CD8-positive, alpha-beta T cell (primary cell): ENCODE measurements at regions of chr1 and their contacts with region 1.

Region 1: DNA sequence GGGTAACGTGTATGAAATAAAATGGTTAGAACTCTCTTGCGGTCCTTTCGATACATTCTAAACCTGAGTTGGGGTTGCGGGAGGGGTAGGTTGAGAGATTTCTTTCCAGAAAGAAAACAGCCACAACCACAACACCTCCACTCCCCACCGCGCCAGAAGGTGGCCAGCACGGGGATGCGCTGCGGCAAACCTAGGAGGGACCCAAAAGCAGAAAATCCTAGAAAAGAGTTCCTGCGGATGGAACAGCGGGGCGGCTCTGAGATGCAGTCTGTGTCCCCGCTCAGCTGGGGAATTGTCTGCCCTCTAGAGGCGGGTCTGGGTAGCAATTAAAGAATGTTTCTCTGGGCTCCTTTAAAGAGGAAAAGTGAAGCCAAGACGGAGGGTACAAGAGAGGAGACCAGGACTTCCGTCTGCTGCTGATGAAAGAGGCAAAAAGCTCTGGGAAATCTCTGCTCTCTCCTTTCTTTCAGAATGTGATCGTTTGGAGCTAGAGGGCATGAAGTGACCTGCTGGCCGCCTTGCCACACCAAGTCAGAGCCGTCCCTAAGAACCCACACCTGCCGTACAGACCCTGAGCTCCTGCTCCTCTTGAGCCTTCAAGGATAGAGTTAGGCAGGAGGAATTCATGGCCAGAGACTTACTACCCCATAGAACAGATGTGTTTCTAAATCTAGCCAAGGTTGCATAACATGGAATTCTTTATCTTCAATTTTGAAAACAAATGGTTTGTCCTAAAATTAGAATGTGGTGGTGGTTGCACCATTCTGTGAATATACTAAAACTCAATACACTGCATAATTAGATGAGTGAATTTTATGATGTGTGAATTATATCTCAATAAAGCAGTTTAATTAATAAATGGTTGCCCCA is 46.5 kb upstream of the COA6 start:
- DNase-seq: peak; percentile 54 to 85 (median 61)
- ATAC-seq: peak; percentile 94
- H3K4me3 ChIP-seq: peak overlapping the region; percentile 64 to 78
- H3K4me3 Mint-ChIP-seq: peak overlapping the region; percentile 85
- H3K27ac ChIP-seq: peak overlapping the region; percentile 39 to 66
- H3K27ac Mint-ChIP-seq: peak overlapping the region; percentile 30
- H3K4me1 ChIP-seq: no peaks in the 10 kb centered on the region
- H3K4me1 Mint-ChIP-seq: peaks cover 15% of the 10 kb centered on the region
- H3K27me3 ChIP-seq: no peaks in the 10 kb centered on the region
- H3K27me3 Mint-ChIP-seq: peaks cover 44% of the 10 kb centered on the region
- CTCF ChIP-seq: peak; percentile 62

Region 2: DNA sequence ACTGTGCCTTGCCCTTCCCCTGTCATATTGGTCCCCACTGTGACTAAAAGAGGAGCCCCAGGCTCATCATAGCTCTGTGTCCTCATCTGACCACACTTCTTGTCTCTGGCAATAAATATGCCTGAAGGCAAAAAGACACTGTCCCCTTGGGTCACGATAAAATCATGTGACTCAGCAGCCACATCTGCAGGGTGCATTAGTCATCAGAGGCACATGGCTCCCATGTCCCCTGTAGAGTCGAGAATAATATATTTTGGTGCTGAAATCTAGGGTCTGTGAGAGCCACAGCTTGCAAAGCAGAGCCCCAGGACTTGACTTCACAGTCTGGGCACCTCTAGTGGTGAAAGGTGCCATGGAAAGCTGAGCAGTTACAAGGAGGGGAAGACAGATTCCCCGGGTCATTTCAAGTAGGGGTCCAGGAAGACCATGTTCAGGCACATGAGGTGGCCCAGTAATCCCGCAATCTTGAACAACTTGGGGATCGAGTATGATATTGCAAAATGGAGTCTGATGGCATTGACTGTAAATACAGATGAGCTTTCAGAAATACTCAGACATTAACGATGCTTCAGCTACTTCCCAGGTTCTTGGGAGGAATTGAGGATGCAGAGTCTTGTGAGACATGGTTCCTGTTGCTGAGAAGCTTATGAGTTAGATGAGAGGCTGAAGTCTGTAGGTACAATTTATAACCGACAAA is 353.6 kb before region 1 on chr1:
- CTCF ChIA-PET with region 1: no interaction called
- POLR2A ChIA-PET with region 1: no interaction called
- intact Hi-C with region 1: no loop called
- DNase-seq: no peak
- ATAC-seq: no peak
- H3K4me3 ChIP-seq: no peak overlapping the region
- H3K4me3 Mint-ChIP-seq: no peak overlapping the region
- H3K27ac ChIP-seq: no peak overlapping the region
- H3K27ac Mint-ChIP-seq: no peak overlapping the region
- H3K4me1 ChIP-seq: no peaks in the 10 kb centered on the region
- H3K4me1 Mint-ChIP-seq: no peaks in the 10 kb centered on the region
- H3K27me3 ChIP-seq: no peaks in the 10 kb centered on the region
- H3K27me3 Mint-ChIP-seq: no peaks in the 10 kb centered on the region
- CTCF ChIP-seq: no peak

Region 3: GRCh38 chr1:234281826-234282489 is 44.8 kb before region 1 on chr1:
- CTCF ChIA-PET with region 1: no interaction called
- POLR2A ChIA-PET with region 1: no interaction called
- intact Hi-C with region 1: no loop called
- DNase-seq: no peak
- ATAC-seq: no peak
- H3K4me3 ChIP-seq: no peak overlapping the region
- H3K4me3 Mint-ChIP-seq: no peak overlapping the region
- H3K27ac ChIP-seq: no peak overlapping the region
- H3K27ac Mint-ChIP-seq: no peak overlapping the region
- H3K4me1 ChIP-seq: no peaks in the 10 kb centered on the region
- H3K4me1 Mint-ChIP-seq: no peaks in the 10 kb centered on the region
- H3K27me3 ChIP-seq: no peaks in the 10 kb centered on the region
- H3K27me3 Mint-ChIP-seq: peaks cover 2% of the 10 kb centered on the region
- CTCF ChIP-seq: no peak

Region 4: DNA sequence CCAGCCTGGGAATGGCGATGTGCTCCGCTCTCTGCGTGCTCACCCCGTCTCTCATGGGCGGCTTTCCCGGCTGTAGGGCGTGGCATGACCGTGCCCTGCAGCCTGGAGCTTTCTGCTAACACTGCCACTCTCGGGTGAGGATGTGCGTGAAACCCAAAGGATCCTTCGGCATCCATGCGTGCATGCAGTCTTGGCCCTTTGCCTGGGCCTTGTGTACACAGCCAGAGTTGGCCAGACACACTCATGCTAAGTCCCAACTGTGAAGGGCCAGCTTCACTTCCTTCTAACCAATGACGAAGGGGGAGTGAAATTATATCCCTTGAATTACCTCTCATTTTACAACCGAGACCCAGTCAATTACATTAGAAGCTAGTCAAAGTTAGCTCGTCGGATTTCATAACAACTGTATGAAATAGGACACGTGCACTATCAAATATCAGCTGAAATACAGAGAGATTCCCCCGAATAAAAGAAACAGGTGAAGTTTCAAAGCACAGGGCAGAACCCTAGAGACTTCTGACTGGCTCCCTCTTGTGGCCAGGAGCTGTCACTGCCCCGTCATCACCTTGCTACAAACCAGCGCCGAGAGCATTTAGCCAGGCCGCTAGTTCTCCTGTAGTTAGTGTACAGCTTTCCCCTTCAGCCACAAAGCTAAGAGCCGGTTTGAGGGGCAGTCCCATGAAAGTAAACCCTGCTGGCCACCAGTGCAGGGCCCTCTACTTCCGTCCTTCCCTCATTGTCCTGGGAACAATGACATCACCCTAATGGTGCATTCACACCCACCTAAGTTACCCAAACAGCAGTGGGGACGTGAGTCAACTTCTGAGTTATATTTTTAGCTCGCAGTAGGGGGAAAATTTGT is 16.9 kb before region 1 on chr1:
- CTCF ChIA-PET with region 1: interaction called, 48 read pairs
- POLR2A ChIA-PET with region 1: no interaction called
- intact Hi-C with region 1: no loop called
- DNase-seq: peak; percentile 52 to 86 (median 66)
- ATAC-seq: peak; percentile 83
- H3K4me3 ChIP-seq: no peak overlapping the region
- H3K4me3 Mint-ChIP-seq: no peak overlapping the region
- H3K27ac ChIP-seq: no peak overlapping the region
- H3K27ac Mint-ChIP-seq: no peak overlapping the region
- H3K4me1 ChIP-seq: peaks cover 18% of the 10 kb centered on the region
- H3K4me1 Mint-ChIP-seq: peaks cover 3% of the 10 kb centered on the region
- H3K27me3 ChIP-seq: no peaks in the 10 kb centered on the region
- H3K27me3 Mint-ChIP-seq: peaks cover 15% of the 10 kb centered on the region
- CTCF ChIP-seq: peak; percentile 83

Region 5: GRCh38 chr1:234373064-234373958 is 46.6 kb after region 1 on chr1 and contains the start of gene COA6:
- CTCF ChIA-PET with region 1: no interaction called
- POLR2A ChIA-PET with region 1: no interaction called
- intact Hi-C with region 1: loop called in 1 of 2 experiments (anchors 1 kb)
- DNase-seq: peak; percentile 82 to 96 (median 88)
- ATAC-seq: peak; percentile 84
- H3K4me3 ChIP-seq: peak within 1 kb of the TSS; percentile 82 to 97
- H3K4me3 Mint-ChIP-seq: peak within 1 kb of the TSS; percentile 97
- H3K27ac ChIP-seq: peak within 1 kb of the TSS; percentile 88 to 99
- H3K27ac Mint-ChIP-seq: peak within 1 kb of the TSS; percentile 99
- H3K4me1 ChIP-seq: peaks cover 19% of the 10 kb centered on the region
- H3K4me1 Mint-ChIP-seq: peaks cover 49% of the 10 kb centered on the region
- H3K27me3 ChIP-seq: no peaks in the 10 kb centered on the region
- H3K27me3 Mint-ChIP-seq: no peaks in the 10 kb centered on the region
- CTCF ChIP-seq: no peak
- total RNA-seq, gene COA6: 7.2 to 8.9 TPM

Region 6: DNA sequence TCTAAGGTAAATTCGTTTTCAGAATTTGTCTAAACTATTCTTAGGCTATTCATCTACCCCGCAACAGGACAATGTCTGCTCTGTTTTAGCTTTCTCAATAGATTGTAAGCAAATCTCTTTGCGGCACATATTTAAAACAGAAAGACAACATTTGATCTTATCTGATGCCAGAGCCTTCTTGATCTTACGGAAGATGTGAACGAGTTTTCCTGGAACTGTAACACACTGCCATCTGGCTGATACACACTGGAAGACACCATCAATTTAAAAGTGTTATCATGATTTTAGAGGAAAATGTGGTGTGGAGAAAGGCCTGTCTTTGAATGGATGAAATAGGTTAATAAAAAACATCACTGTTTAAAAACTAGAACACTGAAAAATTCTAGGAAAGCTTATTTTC is 82.6 kb after region 1 on chr1:
- CTCF ChIA-PET with region 1: no interaction called
- POLR2A ChIA-PET with region 1: no interaction called
- intact Hi-C with region 1: loop called (anchors 2 kb)
- DNase-seq: peak in 2 of 9 experiments; percentile 14 to 51
- ATAC-seq: peak; percentile 40
- H3K4me3 ChIP-seq: no peak overlapping the region
- H3K4me3 Mint-ChIP-seq: no peak overlapping the region
- H3K27ac ChIP-seq: no peak overlapping the region
- H3K27ac Mint-ChIP-seq: peak overlapping the region; percentile 66
- H3K4me1 ChIP-seq: no peaks in the 10 kb centered on the region
- H3K4me1 Mint-ChIP-seq: peaks cover 7% of the 10 kb centered on the region
- H3K27me3 ChIP-seq: no peaks in the 10 kb centered on the region
- H3K27me3 Mint-ChIP-seq: no peaks in the 10 kb centered on the region
- CTCF ChIP-seq: no peak

Region 7: GRCh38 chr1:234458352-234459017 is 131.8 kb after region 1 on chr1:
- CTCF ChIA-PET with region 1: no interaction called
- POLR2A ChIA-PET with region 1: no interaction called
- intact Hi-C with region 1: no loop called
- DNase-seq: no peak
- ATAC-seq: no peak
- H3K4me3 ChIP-seq: no peak overlapping the region
- H3K4me3 Mint-ChIP-seq: no peak overlapping the region
- H3K27ac ChIP-seq: no peak overlapping the region
- H3K27ac Mint-ChIP-seq: no peak overlapping the region
- H3K4me1 ChIP-seq: no peaks in the 10 kb centered on the region
- H3K4me1 Mint-ChIP-seq: no peaks in the 10 kb centered on the region
- H3K27me3 ChIP-seq: no peaks in the 10 kb centered on the region
- H3K27me3 Mint-ChIP-seq: no peaks in the 10 kb centered on the region
- CTCF ChIP-seq: no peak

Region 8: DNA sequence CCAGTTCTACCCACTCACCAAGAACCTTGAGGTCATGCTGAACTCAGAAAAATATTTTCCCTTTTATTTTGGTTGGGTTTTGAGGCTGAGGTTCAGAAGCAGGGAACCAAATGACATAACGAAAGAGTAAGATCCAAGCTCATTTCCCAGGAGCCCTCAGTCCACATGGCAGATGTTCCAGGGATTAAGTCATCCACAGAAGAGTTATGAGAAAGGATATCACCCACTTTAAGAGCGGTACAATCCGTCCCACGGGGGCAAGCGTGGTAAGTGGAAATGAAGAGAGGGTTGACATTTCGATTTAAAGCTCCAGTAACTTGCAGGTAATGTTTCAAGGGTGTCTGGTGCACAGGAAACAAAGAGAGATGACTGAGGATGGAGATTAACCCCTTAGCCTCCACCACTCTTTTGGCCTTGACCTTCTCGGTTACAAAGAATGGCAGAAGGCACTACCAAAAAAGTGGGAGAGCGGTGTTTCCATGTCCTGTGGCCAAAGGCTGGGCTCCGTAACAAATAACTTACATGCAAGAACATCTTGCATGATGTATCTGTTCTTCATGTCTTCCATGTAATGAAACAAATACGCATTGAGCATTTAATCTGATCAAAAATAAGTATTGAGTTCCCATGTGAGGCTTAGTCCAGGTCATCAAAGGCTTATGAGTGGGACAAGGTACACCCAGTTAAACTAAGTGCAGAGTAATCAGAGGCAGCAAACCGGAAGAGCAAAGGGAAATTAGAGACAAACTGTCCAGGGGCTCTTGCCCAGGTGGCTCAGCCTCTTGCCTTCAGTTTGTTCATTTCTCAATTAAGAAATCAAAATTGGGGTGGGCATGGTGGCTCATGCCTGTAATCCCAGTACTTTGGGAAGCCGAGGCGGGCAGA is 560.5 kb after region 1 on chr1:
- CTCF ChIA-PET with region 1: no interaction called
- POLR2A ChIA-PET with region 1: no interaction called
- intact Hi-C with region 1: no loop called
- DNase-seq: no peak
- ATAC-seq: no peak
- H3K4me3 ChIP-seq: no peak overlapping the region
- H3K4me3 Mint-ChIP-seq: no peak overlapping the region
- H3K27ac ChIP-seq: no peak overlapping the region
- H3K27ac Mint-ChIP-seq: no peak overlapping the region
- H3K4me1 ChIP-seq: peaks cover 3% of the 10 kb centered on the region
- H3K4me1 Mint-ChIP-seq: peaks cover 12% of the 10 kb centered on the region
- H3K27me3 ChIP-seq: no peaks in the 10 kb centered on the region
- H3K27me3 Mint-ChIP-seq: no peaks in the 10 kb centered on the region
- CTCF ChIP-seq: no peak

Region 9: DNA sequence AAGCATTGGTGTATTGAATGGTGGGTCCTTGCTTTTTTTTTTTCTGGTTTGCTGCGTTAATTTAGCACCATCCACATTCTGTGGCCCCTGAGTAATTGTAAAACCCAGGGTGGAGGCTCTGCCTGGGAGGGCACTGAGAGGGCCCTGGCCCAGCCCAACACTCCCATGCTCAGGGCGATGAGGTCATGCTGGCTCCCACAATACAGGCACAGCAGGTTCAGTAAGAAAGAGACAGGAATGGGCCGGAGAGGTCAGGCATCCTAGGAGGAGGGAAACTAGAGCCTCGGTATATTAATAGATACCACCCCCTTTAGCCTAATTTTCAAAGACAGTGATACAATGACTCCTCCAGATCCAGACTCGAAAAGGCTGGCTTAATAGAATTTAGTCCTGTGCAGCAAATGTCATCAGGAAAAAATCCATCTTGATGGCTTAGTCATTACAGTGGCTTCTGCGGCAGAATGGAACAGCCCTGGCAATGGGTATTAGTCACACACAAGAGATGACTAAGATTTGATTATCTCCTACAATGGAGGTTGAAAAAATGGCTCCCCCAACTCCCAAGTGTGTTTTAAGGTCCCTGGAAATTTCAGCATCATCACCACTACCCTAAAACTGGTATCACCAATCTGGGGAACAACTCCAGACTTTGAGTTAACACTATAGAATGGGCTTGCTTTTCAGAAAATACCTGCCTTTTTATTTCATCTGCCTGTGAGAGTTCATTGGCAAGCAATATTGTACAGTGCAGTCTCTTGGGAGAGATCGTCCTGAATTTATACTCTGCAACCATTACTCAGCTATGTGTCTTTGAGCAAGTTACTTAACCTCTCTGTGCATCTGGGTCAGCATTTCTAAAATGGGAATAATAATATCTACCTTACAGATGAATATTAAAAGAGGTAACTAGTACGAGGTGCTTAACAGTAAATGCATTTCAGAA is 1583.9 kb after region 1 on chr1:
- CTCF ChIA-PET with region 1: no interaction called
- POLR2A ChIA-PET with region 1: no interaction called
- intact Hi-C with region 1: loop called in 1 of 2 experiments (anchors 5 kb)
- DNase-seq: no peak
- ATAC-seq: no peak
- H3K4me3 ChIP-seq: no peak overlapping the region
- H3K4me3 Mint-ChIP-seq: no peak overlapping the region
- H3K27ac ChIP-seq: no peak overlapping the region
- H3K27ac Mint-ChIP-seq: no peak overlapping the region
- H3K4me1 ChIP-seq: no peaks in the 10 kb centered on the region
- H3K4me1 Mint-ChIP-seq: no peaks in the 10 kb centered on the region
- H3K27me3 ChIP-seq: no peaks in the 10 kb centered on the region
- H3K27me3 Mint-ChIP-seq: no peaks in the 10 kb centered on the region
- CTCF ChIP-seq: no peak